Activated B cell treated with CpG ODN at 0.5 μM for 24 hours (primary cell): ENCODE measurements at regions of chr7 and their contacts with region 1.

Region 1: GRCh38 chr7:106693677-106694353 is 32.9 kb upstream of the CCDC71L start:
- DNase-seq: no peak
- ATAC-seq: no peak
- H3K4me3 Mint-ChIP-seq: no peak overlapping the region
- H3K27ac Mint-ChIP-seq: no peak overlapping the region
- H3K4me1 Mint-ChIP-seq: no peaks in the 10 kb centered on the region
- H3K27me3 Mint-ChIP-seq: no peaks in the 10 kb centered on the region
- CTCF ChIP-seq: no peak

Region 2: GRCh38 chr7:106704000-106704840 is 10.4 kb after region 1 on chr7:
- CTCF ChIA-PET with region 1: no interaction called
- POLR2A ChIA-PET with region 1: no interaction called
- intact Hi-C with region 1: loop called (anchors 2 kb)
- DNase-seq: no peak
- ATAC-seq: peak; percentile 34
- H3K4me3 Mint-ChIP-seq: no peak overlapping the region
- H3K27ac Mint-ChIP-seq: no peak overlapping the region
- H3K4me1 Mint-ChIP-seq: peaks cover 8% of the 10 kb centered on the region
- H3K27me3 Mint-ChIP-seq: no peaks in the 10 kb centered on the region
- CTCF ChIP-seq: no peak